ENCODE measurements at regions of chr14 and their contacts with region 1.

Region 1: GRCh38 chr14:86055512-86055911 is 525.6 kb downstream of the FLRT2 start:
- DNase-seq: no peak
- H3K4me3 ChIP-seq: no peak overlapping the region
- H3K27ac ChIP-seq: no peak overlapping the region
- H3K27me3 ChIP-seq: no peaks in the 10 kb centered on the region
- CTCF ChIP-seq: peak; percentile 30; the same call in 1 of the 2 replicates

Region 2: DNA sequence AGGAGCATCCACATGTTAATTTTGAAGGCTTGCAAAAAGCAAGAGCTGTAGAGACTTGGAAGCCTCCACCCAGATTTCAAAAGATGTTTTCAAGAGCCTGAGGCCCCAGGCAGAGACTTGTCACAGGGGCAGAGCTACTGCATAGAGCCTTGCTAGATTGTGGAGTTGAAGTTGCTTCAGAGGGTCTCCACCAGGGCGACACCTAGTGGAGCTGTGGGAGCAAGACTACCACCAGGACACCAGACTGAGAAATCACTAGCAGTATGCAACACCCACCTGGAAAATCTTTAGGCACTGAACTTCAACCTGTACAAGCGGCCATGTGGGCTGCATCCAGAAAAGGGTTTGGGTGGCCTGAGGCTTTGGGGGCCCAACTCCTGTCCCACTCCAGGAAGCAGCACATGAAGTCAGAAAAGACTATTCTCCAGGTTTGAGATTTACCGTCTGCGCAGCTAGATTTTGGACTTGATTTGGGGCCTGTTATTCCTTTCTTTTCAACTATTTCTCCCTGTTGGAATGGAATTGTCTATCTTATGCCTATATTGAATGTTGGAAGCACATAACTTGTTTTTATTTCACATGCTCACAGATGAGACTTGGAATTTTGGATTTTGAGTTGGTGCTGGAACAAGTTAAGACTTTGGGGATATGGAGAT is 17.0 kb before region 1 on chr14:
- CTCF ChIA-PET with region 1: interaction called, 10 read pairs
- POLR2A ChIA-PET with region 1: no interaction called
- DNase-seq: peak; percentile 29
- H3K4me3 ChIP-seq: no peak overlapping the region
- H3K27ac ChIP-seq: no peak overlapping the region
- H3K27me3 ChIP-seq: no peaks in the 10 kb centered on the region
- CTCF ChIP-seq: peak; percentile 89

Region 3: DNA sequence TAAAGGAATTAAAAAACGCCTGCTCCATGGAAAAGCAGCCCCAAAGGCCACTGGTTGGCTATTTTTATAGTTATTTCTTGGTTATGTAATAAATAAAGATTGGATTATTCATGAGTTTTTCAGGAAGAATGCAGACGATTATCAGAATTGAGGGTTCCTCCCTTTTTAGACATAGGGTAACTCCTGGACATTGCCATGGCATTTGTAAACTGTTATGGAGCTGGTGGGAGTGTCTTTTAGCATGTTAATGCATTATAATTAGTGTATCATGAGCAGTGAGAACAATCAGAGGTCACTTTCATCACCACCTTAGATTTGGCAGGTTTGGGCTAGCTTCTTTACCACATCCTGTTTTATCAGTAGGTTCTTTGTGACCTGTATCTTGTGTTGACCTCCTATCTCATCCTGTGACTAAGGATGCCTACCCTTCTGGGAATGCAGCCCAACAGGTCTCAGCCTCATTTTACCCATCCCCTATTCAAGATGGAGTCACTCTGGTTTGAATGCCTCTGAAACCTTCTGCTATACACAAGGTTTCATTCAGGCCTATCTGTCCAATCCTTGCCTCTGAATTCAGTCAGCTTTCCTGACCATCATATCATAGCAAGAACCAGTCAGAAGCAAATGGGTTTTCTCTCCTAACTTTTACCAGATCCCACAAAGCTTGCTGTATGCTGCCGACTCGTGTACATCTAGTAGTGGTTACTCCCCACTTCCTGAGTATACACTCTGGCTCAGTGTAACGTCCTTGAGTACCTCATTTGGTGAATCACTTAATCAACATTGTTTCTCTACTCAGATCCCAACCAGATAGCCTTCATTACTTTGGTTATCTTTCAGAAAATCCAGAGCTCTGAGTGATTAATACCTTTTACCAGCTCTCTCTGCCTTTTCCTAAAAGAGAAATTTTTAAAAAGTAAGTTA is 1209.0 kb after region 1 on chr14:
- CTCF ChIA-PET with region 1: no interaction called
- POLR2A ChIA-PET with region 1: no interaction called
- DNase-seq: no peak
- H3K4me3 ChIP-seq: no peak overlapping the region
- H3K27ac ChIP-seq: no peak overlapping the region
- H3K27me3 ChIP-seq: no peaks in the 10 kb centered on the region
- CTCF ChIP-seq: no peak